ENCODE measurements at regions of chr2 and their contacts with region 1.

Region 1: GRCh38 chr2:147910990-147911473 is 66.2 kb downstream of the ACVR2A start:
- DNase-seq: peak in 1 of 2 experiments; percentile 58
- H3K4me3 ChIP-seq: no peak overlapping the region
- H3K4me3 Mint-ChIP-seq: no peak overlapping the region
- H3K27ac Mint-ChIP-seq: no peak overlapping the region
- H3K4me1 ChIP-seq: no peaks in the 10 kb centered on the region
- H3K4me1 Mint-ChIP-seq: no peaks in the 10 kb centered on the region
- H3K27me3 ChIP-seq: no peaks in the 10 kb centered on the region
- H3K27me3 Mint-ChIP-seq: no peaks in the 10 kb centered on the region
- CTCF ChIP-seq: peak; percentile 61 to 80

Region 2: GRCh38 chr2:146734042-146734820 is 1176.8 kb before region 1 on chr2:
- CTCF ChIA-PET with region 1: interaction called, 3 read pairs
- POLR2A ChIA-PET with region 1: no interaction called
- intact Hi-C with region 1: loop called (anchors 1 kb)
- DNase-seq: peak in 1 of 2 experiments; percentile 47
- H3K4me3 ChIP-seq: no peak overlapping the region
- H3K4me3 Mint-ChIP-seq: no peak overlapping the region
- H3K27ac Mint-ChIP-seq: no peak overlapping the region
- H3K4me1 ChIP-seq: no peaks in the 10 kb centered on the region
- H3K4me1 Mint-ChIP-seq: no peaks in the 10 kb centered on the region
- H3K27me3 ChIP-seq: no peaks in the 10 kb centered on the region
- H3K27me3 Mint-ChIP-seq: peaks cover 2% of the 10 kb centered on the region
- CTCF ChIP-seq: peak; percentile 32 to 44

Region 3: GRCh38 chr2:147045113-147045512 is 865.9 kb before region 1 on chr2:
- CTCF ChIA-PET with region 1: interaction called, 15 read pairs
- POLR2A ChIA-PET with region 1: no interaction called
- intact Hi-C with region 1: loop called (anchors 1 kb)
- DNase-seq: peak; percentile 38 to 61
- H3K4me3 ChIP-seq: no peak overlapping the region
- H3K4me3 Mint-ChIP-seq: no peak overlapping the region
- H3K27ac Mint-ChIP-seq: no peak overlapping the region
- H3K4me1 ChIP-seq: peaks cover 11% of the 10 kb centered on the region; the same call in 1 of the 2 replicates
- H3K4me1 Mint-ChIP-seq: peaks cover 7% of the 10 kb centered on the region
- H3K27me3 ChIP-seq: no peaks in the 10 kb centered on the region
- H3K27me3 Mint-ChIP-seq: no peaks in the 10 kb centered on the region
- CTCF ChIP-seq: peak; percentile 65 to 69

Region 4: DNA sequence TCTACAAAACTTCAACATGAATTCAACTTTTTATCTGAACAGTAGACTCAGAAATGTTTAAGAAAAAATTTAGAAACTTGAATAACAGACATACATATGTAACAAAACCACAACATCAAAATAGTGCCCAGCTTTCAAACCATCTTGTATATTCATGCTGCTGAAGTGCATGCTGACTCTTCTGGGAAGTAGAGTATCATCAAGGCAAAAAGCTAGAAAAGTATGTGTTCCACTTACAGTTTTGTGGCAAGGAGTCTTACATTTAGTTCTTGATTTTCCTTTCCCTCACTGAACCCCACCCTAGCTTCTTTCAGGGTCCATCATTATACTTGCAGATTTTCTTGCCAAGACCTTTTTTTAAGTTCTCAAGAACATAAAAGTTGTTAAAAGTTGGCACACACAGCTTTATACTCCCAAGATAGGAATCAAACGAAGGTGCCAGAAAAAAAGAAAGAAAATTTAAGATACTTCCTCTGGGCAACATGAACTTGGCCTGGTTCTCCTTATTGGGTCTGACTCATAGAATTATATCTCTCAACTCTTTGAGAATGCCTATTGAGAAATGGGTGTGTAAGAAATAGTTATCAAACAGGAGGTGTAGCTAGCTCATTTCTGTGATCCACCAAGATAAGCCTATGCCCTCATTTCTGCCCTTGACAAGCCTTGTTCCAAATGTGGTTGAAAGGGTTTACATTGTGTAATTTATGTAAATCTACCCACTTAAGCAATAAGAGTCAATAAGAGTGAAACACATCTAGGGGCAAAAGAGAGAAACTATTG is 733.8 kb before region 1 on chr2:
- CTCF ChIA-PET with region 1: no interaction called
- POLR2A ChIA-PET with region 1: no interaction called
- intact Hi-C with region 1: loop called (anchors 10 kb)
- DNase-seq: no peak
- H3K4me3 ChIP-seq: no peak overlapping the region
- H3K4me3 Mint-ChIP-seq: no peak overlapping the region
- H3K27ac Mint-ChIP-seq: no peak overlapping the region
- H3K4me1 ChIP-seq: peaks cover 21% of the 10 kb centered on the region
- H3K4me1 Mint-ChIP-seq: peaks cover 11% of the 10 kb centered on the region
- H3K27me3 ChIP-seq: no peaks in the 10 kb centered on the region
- H3K27me3 Mint-ChIP-seq: no peaks in the 10 kb centered on the region
- CTCF ChIP-seq: no peak

Region 5: DNA sequence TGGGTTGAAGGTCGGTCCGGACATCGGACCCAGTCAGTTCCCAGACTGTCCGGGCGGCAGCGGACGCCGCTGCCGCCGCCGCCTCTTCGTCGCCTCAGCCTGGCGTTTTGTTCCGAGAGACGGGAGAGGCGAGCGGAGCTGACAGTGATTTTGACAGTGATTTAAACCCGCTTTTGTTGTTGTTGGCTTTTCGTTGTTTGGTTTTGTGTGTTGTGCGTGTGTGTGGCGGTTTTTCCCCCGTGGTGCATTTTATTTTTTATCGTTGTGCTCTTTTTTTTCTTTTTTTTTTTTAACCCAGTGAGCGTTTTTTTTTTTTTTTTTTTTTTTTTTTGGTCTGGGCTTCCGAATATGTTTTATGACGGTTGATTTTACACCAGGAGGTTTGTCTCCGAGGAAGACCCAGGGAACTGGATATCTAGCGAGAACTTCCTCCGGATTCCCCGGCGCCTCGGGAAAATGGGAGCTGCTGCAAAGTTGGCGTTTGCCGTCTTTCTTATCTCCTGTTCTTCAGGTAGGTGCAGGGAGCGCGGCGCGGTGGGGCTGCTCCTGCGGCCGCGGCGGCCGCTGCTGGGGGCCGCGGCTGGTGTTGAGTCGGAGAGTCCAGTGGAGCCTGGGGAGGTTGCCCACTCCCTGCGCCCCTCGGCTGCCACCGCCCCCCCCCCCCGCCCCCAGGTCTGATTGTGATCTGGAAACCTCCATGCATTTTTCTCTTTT is 66.2 kb before region 1 on chr2 and contains the start of gene ACVR2A:
- CTCF ChIA-PET with region 1: interaction called, 4 read pairs
- POLR2A ChIA-PET with region 1: interaction called, 3 read pairs
- intact Hi-C with region 1: loop called (anchors 5 kb)
- DNase-seq: peak; percentile 49 to 59
- H3K4me3 ChIP-seq: peak within 1 kb of the TSS; percentile 56
- H3K4me3 Mint-ChIP-seq: peak within 1 kb of the TSS; percentile 99
- H3K27ac Mint-ChIP-seq: peak within 1 kb of the TSS; percentile 98
- H3K4me1 ChIP-seq: peaks cover 8% of the 10 kb centered on the region; the same call in 1 of the 2 replicates
- H3K4me1 Mint-ChIP-seq: peaks cover 22% of the 10 kb centered on the region
- H3K27me3 ChIP-seq: no peaks in the 10 kb centered on the region
- H3K27me3 Mint-ChIP-seq: no peaks in the 10 kb centered on the region
- CTCF ChIP-seq: no peak
- total RNA-seq, gene ACVR2A: 15.7 and 16.4 TPM in 2 replicates

Region 6: GRCh38 chr2:148027822-148028221 is 116.8 kb after region 1 on chr2:
- CTCF ChIA-PET with region 1: no interaction called
- POLR2A ChIA-PET with region 1: no interaction called
- intact Hi-C with region 1: no loop called
- DNase-seq: no peak
- H3K4me3 ChIP-seq: no peak overlapping the region
- H3K4me3 Mint-ChIP-seq: no peak overlapping the region
- H3K27ac Mint-ChIP-seq: no peak overlapping the region
- H3K4me1 ChIP-seq: no peaks in the 10 kb centered on the region
- H3K4me1 Mint-ChIP-seq: peaks cover 7% of the 10 kb centered on the region
- H3K27me3 ChIP-seq: no peaks in the 10 kb centered on the region
- H3K27me3 Mint-ChIP-seq: no peaks in the 10 kb centered on the region
- CTCF ChIP-seq: no peak

Region 7: GRCh38 chr2:148209603-148210002 is 298.6 kb after region 1 on chr2:
- CTCF ChIA-PET with region 1: no interaction called
- POLR2A ChIA-PET with region 1: no interaction called
- intact Hi-C with region 1: no loop called
- DNase-seq: peak; percentile 54 to 69
- H3K4me3 ChIP-seq: no peak overlapping the region
- H3K4me3 Mint-ChIP-seq: no peak overlapping the region
- H3K27ac Mint-ChIP-seq: no peak overlapping the region
- H3K4me1 ChIP-seq: peaks cover 9% of the 10 kb centered on the region
- H3K4me1 Mint-ChIP-seq: peaks cover 15% of the 10 kb centered on the region
- H3K27me3 ChIP-seq: no peaks in the 10 kb centered on the region
- H3K27me3 Mint-ChIP-seq: no peaks in the 10 kb centered on the region
- CTCF ChIP-seq: no peak

Measured in Caco-2 (cell line).